ENCODE measurements at regions of chrX and their contacts with region 1.

Region 1: DNA sequence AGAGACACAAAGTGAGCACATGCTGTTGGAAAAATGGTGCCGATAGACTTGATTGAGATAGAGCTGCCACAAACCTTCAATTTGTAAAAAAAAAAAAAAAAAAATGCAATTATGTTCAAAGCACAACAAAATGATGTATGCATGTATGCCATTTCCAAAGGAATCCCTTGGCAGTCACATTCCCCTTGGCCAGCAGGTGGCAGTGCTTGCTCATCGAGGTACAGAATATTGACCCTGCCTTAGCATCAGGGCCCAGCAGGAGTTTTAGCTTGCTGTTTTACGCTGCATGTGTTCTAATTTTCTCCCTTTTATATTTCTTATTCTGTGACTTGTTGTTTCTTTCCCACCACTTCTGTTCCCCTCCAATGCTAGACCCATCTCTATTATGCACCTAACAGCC is 34.5 kb upstream of the CYBB start:
- DNase-seq: peak; percentile 80
- H3K4me3 Mint-ChIP-seq: no peak overlapping the region
- H3K27ac Mint-ChIP-seq: peak overlapping the region; percentile 80
- H3K4me1 Mint-ChIP-seq: peaks cover 18% of the 10 kb centered on the region
- H3K27me3 Mint-ChIP-seq: no peaks in the 10 kb centered on the region

Region 2: DNA sequence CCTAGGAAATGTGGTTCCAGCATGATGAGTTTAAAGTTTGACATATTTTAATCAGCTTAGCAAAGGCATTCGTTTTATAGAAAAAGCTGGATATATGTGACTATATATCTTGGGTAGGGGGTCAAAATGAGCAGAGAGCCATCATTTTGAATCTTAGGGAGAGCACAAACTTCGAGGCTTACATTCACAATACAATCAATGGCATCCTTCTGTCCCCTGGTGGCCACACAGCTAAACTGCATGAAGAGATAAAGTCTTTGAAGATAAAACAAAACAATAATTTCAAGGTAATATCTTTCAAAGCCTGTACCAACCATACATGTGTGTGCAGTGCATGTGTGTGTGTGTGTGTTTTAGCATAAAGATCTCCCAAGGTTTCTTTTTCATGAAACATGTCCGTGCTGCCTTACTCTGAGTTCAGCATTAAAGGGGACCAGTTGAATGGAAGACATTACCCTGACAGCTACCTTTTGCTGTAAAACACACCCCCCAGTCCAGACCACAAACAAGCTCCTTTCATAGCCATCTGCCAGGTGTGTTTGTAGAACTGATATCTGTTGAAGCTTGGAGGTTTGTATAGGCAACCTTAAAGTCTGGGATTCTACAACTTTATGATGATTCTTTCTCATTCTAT is 80.0 kb after region 1 on chrX:
- CTCF ChIA-PET with region 1: interaction called, 44 read pairs
- POLR2A ChIA-PET with region 1: interaction called, 3 read pairs
- DNase-seq: peak; percentile 62
- H3K4me3 Mint-ChIP-seq: no peak overlapping the region
- H3K27ac Mint-ChIP-seq: peak overlapping the region; percentile 72
- H3K4me1 Mint-ChIP-seq: peaks cover 26% of the 10 kb centered on the region
- H3K27me3 Mint-ChIP-seq: no peaks in the 10 kb centered on the region

Region 3: DNA sequence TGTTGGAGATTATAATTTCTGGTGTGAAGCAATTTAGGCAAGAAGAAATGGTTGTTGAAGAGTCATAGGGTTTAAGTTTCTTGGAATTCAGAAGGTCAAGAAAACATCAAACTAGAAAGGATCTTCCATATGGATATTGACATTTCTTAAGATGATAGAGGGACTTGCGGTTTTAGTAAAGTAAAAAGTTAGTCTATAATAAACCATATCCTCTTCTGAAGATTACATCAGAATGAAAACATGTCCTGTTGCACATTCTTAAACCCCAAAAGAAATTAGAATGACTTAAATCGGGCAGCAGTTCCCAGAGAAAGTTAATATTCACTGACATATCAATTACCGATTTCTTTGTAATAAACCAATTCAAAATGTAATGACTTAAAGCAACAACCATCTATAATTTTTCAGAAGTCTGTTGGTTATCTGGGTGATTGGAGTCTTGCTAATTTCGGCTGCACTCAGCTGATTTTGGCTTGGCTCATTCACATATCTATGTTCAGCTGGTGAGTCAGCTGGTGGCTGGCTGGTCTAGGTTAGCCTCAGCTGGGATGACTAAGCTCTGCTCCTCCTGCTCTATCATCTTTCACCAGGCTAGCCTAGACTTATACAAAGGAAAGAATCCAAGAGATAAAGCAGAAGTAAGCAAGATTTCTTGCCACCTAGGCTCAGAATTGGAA is 126.4 kb after region 1 on chrX:
- CTCF ChIA-PET with region 1: no interaction called
- POLR2A ChIA-PET with region 1: no interaction called
- DNase-seq: no peak
- H3K4me3 Mint-ChIP-seq: no peak overlapping the region
- H3K27ac Mint-ChIP-seq: no peak overlapping the region
- H3K4me1 Mint-ChIP-seq: peaks cover 11% of the 10 kb centered on the region
- H3K27me3 Mint-ChIP-seq: no peaks in the 10 kb centered on the region

Measured in activated CD4-positive, alpha-beta T cell treated with anti-CD3 and anti-CD28 coated beads, Interleukin-2, amount 10 ng/mL, durations not matched to agents 7 days and 5 days (primary cell).